Posterior vena cava (tissue), 2 donors: ENCODE measurements at regions of chr10 and their contacts with region 1.

Region 1: DNA sequence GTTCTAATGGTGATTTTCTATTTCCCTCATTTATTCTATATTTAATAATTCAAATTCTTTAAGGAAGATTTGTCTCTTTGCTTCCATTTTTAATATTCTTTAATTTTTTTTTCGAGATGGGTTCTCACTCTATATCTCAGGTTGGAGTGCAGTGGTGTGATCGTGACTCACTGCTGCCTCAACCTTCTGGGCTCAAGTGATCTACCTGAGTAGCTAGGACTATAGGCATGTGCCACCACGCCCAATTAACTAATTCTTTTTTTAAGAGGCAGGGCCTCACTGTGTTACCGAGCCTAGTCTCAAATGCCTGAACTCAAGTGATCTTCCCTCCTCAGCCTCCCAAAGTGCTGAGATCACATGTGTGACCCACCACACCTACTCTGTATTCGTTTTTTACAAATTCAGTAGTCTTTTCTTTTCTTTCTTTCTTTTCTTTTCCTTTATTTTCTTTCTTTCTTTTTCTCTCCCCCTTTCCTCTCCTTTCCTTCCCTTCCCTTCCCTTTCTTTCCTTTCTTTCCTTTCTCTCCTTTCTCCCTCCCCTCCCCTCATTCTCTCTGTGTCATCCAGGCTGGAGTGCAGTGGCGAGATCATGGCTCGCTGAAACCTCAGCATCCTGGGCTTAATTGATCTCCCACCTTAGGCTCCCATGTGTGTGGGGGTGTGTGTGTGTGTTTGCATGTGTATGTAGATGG is 323.1 kb downstream of the ADK start:
- DNase-seq: no peak

Region 2: GRCh38 chr10:75696536-75696935 is 1222.4 kb after region 1 on chr10:
- intact Hi-C with region 1: loop called in 1 of 2 experiments (anchors 5 kb)
- DNase-seq: no peak